ENCODE measurements at regions of chr11 and their contacts with region 1.

Region 1: DNA sequence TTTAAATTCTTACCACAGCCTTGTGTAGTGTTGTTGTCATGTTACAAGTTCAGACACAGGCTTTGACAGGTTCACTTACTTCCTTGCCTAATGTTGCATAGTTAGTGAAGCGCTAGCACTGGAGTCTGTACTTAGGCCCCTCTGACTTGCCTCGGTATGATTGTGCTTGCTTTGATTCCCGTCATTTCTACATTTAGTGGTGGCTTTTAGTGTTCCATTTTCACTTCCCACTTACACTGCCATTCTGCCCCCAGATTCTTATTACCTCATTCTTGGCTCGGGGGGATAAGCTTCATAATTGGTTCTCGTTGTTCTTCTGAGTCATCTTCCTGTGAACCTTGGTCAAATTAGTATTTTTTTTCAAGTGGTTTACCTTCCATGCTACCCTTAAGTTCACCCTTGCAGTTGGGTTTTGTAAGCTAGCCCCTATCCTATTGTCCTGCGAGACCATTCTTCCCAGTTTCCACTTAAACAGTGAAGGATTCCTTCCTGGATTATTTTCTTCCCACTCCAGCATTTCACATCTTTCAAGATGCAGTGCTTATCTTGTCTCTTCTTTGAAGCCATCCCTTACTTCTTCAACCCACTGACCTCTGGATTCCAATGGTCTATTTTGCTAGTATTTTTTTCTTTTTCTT is 68.7 kb downstream of the DDX10 start:
- DNase-seq: peak; percentile 72
- H3K4me3 Mint-ChIP-seq: no peak overlapping the region
- H3K27ac Mint-ChIP-seq: peak overlapping the region; percentile 82
- H3K4me1 Mint-ChIP-seq: peaks cover 41% of the 10 kb centered on the region
- H3K27me3 Mint-ChIP-seq: no peaks in the 10 kb centered on the region

Region 2: GRCh38 chr11:107840129-107840484 is 893.5 kb before region 1 on chr11:
- CTCF ChIA-PET with region 1: no interaction called
- intact Hi-C with region 1: loop called (anchors 1 kb)
- DNase-seq: no peak
- H3K4me3 Mint-ChIP-seq: no peak overlapping the region
- H3K27ac Mint-ChIP-seq: peak overlapping the region; percentile 93
- H3K4me1 Mint-ChIP-seq: peaks cover 68% of the 10 kb centered on the region
- H3K27me3 Mint-ChIP-seq: no peaks in the 10 kb centered on the region

Region 3: DNA sequence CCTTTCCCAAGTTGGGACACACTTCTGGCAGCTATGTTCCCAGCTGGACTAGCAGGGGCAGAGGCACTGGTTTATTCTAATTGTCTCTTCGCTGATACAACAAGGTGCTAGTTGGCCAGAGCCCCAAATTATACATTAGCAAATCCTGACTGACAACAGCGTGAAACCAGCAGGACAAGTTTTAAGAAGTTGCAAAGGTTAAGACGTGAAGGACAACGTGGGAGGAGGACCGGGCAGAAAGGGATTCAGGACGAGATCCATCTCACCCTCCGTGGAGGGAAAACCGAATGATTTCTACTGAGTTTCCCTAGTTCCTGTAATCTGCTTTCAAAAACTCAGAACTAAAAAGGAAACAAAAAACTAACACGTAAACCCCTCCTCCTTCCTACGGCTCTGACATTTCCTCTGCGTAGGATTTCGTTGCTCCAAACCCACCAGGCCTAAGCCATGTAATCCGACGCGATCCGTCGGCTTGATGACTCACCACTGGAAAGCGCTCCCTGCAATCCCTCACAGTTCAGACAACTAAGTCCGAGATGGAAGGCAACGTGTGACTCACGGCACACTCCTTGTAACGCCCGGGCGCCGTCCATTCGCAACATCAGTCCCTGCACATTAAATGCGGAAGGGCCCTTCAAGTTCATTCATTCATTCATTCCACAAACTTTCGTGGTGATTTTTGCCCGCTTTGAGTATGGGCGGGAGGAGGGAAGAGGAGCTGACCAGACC is 236.1 kb before region 1 on chr11:
- CTCF ChIA-PET with region 1: no interaction called
- intact Hi-C with region 1: loop called (anchors 1 kb)
- DNase-seq: peak; percentile 84
- H3K4me3 Mint-ChIP-seq: peak overlapping the region; percentile 85
- H3K27ac Mint-ChIP-seq: peak overlapping the region; percentile 92
- H3K4me1 Mint-ChIP-seq: peaks cover 16% of the 10 kb centered on the region
- H3K27me3 Mint-ChIP-seq: no peaks in the 10 kb centered on the region

Region 4: DNA sequence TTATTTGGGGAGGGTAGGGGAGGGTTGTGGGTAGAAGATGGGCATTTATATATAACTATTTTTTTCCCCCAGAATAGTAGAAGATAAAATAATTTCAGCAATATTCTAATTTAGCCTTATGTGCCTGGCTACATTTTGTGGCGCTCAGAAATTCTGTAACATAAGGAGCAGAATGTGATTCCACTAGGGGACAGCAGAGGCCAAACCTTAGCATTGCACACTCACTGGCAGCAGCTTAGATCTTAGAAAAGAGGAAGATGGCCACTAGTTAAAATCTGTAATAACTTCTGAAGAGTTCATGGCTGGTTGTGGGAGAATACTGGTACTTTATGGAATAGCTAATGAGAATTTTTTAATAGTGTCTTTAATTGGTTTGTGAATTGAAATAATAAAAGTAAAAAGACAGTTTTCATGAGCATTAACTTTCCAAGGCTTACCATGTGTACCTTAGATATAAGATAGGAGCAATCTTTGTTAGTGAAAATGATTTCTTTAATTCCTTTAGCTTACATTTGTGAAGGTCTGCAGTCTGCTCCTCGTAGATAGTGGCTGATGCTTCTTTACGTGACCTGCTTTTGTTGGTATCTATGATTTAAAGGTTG is 35.6 kb before region 1 on chr11:
- CTCF ChIA-PET with region 1: interaction called, 15 read pairs
- intact Hi-C with region 1: loop called (anchors 1 kb)
- DNase-seq: peak; percentile 67
- H3K4me3 Mint-ChIP-seq: no peak overlapping the region
- H3K27ac Mint-ChIP-seq: no peak overlapping the region
- H3K4me1 Mint-ChIP-seq: no peaks in the 10 kb centered on the region
- H3K27me3 Mint-ChIP-seq: no peaks in the 10 kb centered on the region

Region 5: GRCh38 chr11:108853864-108854263 is 120.3 kb after region 1 on chr11:
- CTCF ChIA-PET with region 1: interaction called, 5 read pairs
- intact Hi-C with region 1: loop called (anchors 1 kb)
- DNase-seq: peak; percentile 11
- H3K4me3 Mint-ChIP-seq: peak overlapping the region; percentile 67
- H3K27ac Mint-ChIP-seq: peak overlapping the region; percentile 82
- H3K4me1 Mint-ChIP-seq: peaks cover 19% of the 10 kb centered on the region
- H3K27me3 Mint-ChIP-seq: no peaks in the 10 kb centered on the region

Region 6: DNA sequence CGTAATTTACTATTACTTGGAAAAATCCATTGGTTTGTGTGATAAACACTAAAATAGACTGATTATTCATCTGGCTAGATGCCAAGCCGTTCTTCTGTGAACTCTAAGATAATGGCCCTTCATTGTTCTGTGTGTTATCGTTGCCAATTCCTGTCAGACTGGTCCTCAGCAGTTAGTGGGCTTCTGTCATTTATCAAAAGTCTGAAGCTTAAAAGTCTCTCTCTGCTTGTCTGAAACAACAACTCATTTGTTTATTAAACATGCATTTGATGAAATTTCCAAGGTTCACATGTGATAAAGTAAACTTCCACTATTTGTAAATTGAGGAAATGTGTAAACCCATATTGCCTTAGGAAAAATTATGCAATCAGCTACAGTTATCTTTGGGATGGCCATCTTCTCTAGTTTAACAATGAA is 1583.9 kb after region 1 on chr11:
- CTCF ChIA-PET with region 1: no interaction called
- intact Hi-C with region 1: loop called (anchors 10 kb)
- DNase-seq: no peak
- H3K4me3 Mint-ChIP-seq: no peak overlapping the region
- H3K27ac Mint-ChIP-seq: no peak overlapping the region
- H3K4me1 Mint-ChIP-seq: peaks cover under 1% of the 10 kb centered on the region
- H3K27me3 Mint-ChIP-seq: peaks cover 12% of the 10 kb centered on the region

Measured in activated naive CD4-positive, alpha-beta T cell treated with anti-CD3 and anti-CD28 coated beads for 36 hours (primary cell).